GM12878 (cell line): ENCODE measurements at regions of chr17 and their contacts with region 1.

Region 1: GRCh38 chr17:63611354-63611753 is 10.7 kb downstream of the TACO1 start:
- DNase-seq: no peak
- ATAC-seq: peak; percentile 55
- H3K4me3 ChIP-seq: no peak overlapping the region
- H3K27ac ChIP-seq: no peak overlapping the region
- H3K4me1 ChIP-seq: no peaks in the 10 kb centered on the region
- H3K27me3 ChIP-seq: no peaks in the 10 kb centered on the region
- CTCF ChIP-seq: no peak
- EP300 ChIP-seq: no peak
- POLR2A ChIP-seq: no peak
- RAD21 ChIP-seq: no peak

Region 2: GRCh38 chr17:63419949-63420867 is 191.1 kb before region 1 on chr17:
- CTCF ChIA-PET with region 1: interaction called, 162 read pairs
- POLR2A ChIA-PET with region 1: interaction called, 6 read pairs
- RAD21 ChIA-PET with region 1: interaction called, 42 read pairs
- SMC1A ChIA-PET with region 1: interaction called, 82 read pairs
- in situ Hi-C with region 1: loop called (anchors 5 kb)
- intact Hi-C with region 1: loop called (anchors 1 kb)
- DNase-seq: no peak
- ATAC-seq: no peak
- H3K4me3 ChIP-seq: no peak overlapping the region
- H3K27ac ChIP-seq: no peak overlapping the region
- H3K4me1 ChIP-seq: no peaks in the 10 kb centered on the region
- H3K27me3 ChIP-seq: peaks cover under 1 to 4% of the 10 kb centered on the region in 2 experiments; a peak in 2 of 4 replicates
- CTCF ChIP-seq: no peak
- EP300 ChIP-seq: no peak
- POLR2A ChIP-seq: no peak
- RAD21 ChIP-seq: no peak

Region 3: GRCh38 chr17:63434876-63435684 is 176.3 kb before region 1 on chr17:
- CTCF ChIA-PET with region 1: interaction called, 162 read pairs
- POLR2A ChIA-PET with region 1: no interaction called
- RAD21 ChIA-PET with region 1: interaction called, 8 read pairs
- SMC1A ChIA-PET with region 1: interaction called, 82 read pairs
- in situ Hi-C with region 1: no loop called
- intact Hi-C with region 1: no loop called
- DNase-seq: no peak
- ATAC-seq: no peak
- H3K4me3 ChIP-seq: no peak overlapping the region
- H3K27ac ChIP-seq: no peak overlapping the region
- H3K4me1 ChIP-seq: no peaks in the 10 kb centered on the region; the same call in 1 of the 2 replicates
- H3K27me3 ChIP-seq: no peaks in the 10 kb centered on the region
- CTCF ChIP-seq: no peak
- EP300 ChIP-seq: no peak
- POLR2A ChIP-seq: no peak
- RAD21 ChIP-seq: no peak

Region 4: DNA sequence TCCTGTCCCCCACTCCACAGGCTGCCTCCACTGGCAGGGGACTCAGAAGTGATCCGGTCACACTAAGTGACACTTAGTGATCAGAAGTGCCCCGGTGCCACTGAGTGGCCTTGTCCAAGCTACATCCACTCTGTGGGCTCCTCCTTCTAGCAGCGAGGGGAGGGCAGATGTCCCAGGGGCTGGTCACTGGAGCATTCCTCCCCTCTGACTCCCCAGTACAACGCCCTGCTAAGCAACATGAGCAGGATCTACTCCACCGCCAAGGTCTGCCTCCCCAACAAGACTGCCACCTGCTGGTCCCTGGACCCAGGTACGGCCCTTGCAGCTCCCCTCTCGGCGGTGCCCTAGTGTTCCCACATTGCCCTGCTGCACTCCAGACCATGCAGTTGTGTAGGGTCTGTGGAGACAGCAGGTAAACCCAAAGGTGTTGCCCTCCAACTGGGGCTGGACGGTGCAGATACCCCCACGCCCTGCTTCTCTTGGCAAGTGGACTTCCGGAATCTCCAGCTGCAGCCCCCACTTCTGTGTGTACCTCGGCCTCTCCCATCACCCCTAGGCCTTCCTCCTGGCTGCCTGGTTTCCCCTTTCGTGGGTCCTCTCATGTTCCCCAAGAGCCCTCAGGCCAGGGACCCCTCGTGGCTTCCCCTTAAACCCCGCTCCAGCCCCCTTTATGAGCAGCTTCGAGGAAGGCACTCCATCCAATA is 132.4 kb before region 1 on chr17:
- CTCF ChIA-PET with region 1: interaction called, 19 read pairs
- POLR2A ChIA-PET with region 1: no interaction called
- RAD21 ChIA-PET with region 1: interaction called, 10 read pairs
- SMC1A ChIA-PET with region 1: no interaction called
- in situ Hi-C with region 1: no loop called
- intact Hi-C with region 1: loop called (anchors 2 kb)
- DNase-seq: no peak
- ATAC-seq: peak; percentile 97
- H3K4me3 ChIP-seq: no peak overlapping the region
- H3K27ac ChIP-seq: no peak overlapping the region
- H3K4me1 ChIP-seq: peaks cover 5% of the 10 kb centered on the region
- H3K27me3 ChIP-seq: peaks cover 9 to 13% of the 10 kb centered on the region in 2 experiments
- CTCF ChIP-seq: peak; percentile 85 to 94 (median 86)
- EP300 ChIP-seq: no peak
- POLR2A ChIP-seq: no peak
- RAD21 ChIP-seq: peak; percentile 90

Region 5: DNA sequence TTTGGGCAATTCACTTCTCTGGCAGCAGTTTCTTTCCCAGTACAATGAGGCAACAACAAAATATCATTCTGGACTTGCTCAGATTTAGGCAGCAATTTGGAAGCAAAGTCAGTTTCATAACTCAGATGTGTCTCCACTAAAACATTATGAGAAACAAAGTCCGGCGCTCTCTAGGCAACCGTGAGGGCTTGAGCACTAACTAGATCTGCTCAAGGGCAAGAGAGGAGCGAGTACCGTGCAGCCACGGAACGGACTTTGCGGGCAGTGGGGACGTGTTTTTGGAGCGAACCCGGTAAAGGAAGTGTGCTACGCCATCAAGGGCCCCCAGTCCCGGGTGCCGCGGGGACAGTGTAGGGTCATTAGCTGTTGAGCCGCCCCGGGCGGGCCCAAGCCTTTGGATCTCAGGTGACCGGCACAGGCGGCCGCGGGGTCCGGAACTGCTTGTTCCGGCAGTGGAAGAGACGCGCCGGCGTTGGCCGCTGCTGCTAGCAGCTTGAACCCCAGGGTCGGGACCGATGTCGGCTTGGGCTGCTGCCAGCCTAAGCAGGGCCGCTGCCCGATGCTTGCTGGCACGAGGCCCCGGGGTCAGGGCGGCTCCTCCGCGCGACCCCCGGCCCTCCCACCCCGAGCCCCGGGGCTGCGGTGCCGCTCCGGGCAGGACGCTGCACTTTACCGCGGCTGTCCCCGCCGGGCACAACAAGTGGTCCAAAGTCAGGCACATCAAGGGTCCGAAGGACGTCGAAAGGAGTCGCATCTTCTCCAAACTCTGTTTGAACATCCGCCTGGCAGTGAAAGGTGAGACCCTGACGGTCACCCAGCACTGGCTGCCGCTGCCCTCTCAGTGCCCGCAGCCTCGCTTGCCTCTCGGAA is 10.6 kb before region 1 on chr17 and contains the start of gene TACO1:
- CTCF ChIA-PET with region 1: interaction called, 39 read pairs
- POLR2A ChIA-PET with region 1: interaction called, 4 read pairs
- RAD21 ChIA-PET with region 1: interaction called, 4 read pairs
- SMC1A ChIA-PET with region 1: interaction called, 10 read pairs
- in situ Hi-C with region 1: no loop called
- intact Hi-C with region 1: no loop called
- DNase-seq: peak; percentile 48
- ATAC-seq: peak; percentile 95
- H3K4me3 ChIP-seq: peak within 1 kb of the TSS; percentile 86
- H3K27ac ChIP-seq: peak within 1 kb of the TSS; percentile 59
- H3K4me1 ChIP-seq: no peaks in the 10 kb centered on the region
- H3K27me3 ChIP-seq: no peaks in the 10 kb centered on the region
- CTCF ChIP-seq: no peak
- EP300 ChIP-seq: no peak
- POLR2A ChIP-seq: peak; percentile 79
- RAD21 ChIP-seq: no peak
- polyA plus RNA-seq, gene TACO1: 8.5 to 16.1 TPM

Region 6: GRCh38 chr17:63646488-63646806 is 35.1 kb after region 1 on chr17:
- CTCF ChIA-PET with region 1: interaction called, 11 read pairs
- POLR2A ChIA-PET with region 1: no interaction called
- RAD21 ChIA-PET with region 1: interaction called, 4 read pairs
- SMC1A ChIA-PET with region 1: no interaction called
- in situ Hi-C with region 1: no loop called
- intact Hi-C with region 1: no loop called
- DNase-seq: peak; percentile 59
- ATAC-seq: peak; percentile 96
- H3K4me3 ChIP-seq: no peak overlapping the region
- H3K27ac ChIP-seq: peak overlapping the region; percentile 85
- H3K4me1 ChIP-seq: peaks cover 26% of the 10 kb centered on the region
- H3K27me3 ChIP-seq: no peaks in the 10 kb centered on the region
- CTCF ChIP-seq: no peak
- EP300 ChIP-seq: peak in 1 of 2 experiments; percentile 69; a peak in 1 of 4 replicates
- POLR2A ChIP-seq: no peak
- RAD21 ChIP-seq: no peak